ENCODE measurements at regions of chr10 and their contacts with region 1.

Region 1: DNA sequence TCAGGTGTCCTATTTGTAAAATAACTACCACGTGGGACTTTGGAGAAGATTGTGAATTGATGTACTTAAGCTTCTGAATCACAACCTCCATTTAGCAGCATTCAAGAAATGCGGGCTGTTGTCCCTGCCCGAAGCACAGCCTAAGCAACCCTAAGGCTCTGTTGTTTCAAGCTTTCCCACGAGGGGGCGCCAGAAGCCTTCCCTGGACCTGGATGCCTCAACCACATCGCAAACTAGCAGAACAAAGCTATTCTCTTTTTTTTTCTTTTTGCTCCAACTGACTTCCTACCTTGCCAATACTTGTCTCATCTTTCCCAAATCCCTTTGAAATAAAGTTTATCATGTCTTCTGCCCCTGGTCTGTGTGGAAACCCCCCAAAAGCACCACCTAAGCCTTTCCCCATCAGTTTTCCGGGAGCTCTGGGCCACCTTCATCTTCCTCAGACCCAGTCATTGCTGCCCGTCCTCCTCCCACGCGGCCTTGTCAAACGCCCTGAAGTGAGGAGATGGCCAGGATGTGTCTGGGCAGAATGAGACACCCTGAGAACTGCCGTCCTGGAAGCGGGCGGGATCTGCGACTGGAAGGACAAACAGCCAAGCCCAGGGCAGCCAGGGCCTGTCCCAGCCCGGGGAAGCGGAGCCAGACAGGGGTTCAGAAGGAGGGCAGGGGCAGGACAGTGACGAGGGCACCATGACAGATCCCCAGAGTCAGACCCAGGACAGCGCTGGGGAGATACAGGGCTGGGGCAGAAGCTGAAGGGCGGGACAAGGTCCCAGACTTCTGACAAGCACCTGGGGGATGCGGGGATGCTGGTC is 112.7 kb downstream of the SLIT1 start:
- DNase-seq: peak; percentile 46
- H3K4me3 ChIP-seq: no peak overlapping the region
- H3K27ac ChIP-seq: no peak overlapping the region
- H3K27me3 ChIP-seq: peaks cover 36% of the 10 kb centered on the region
- CTCF ChIP-seq: peak; percentile 94

Region 2: GRCh38 chr10:96949039-96949683 is 123.9 kb before region 1 on chr10:
- CTCF ChIA-PET with region 1: no interaction called
- POLR2A ChIA-PET with region 1: no interaction called
- DNase-seq: no peak
- H3K4me3 ChIP-seq: no peak overlapping the region
- H3K27ac ChIP-seq: no peak overlapping the region
- H3K27me3 ChIP-seq: no peaks in the 10 kb centered on the region
- CTCF ChIP-seq: no peak

Region 3: GRCh38 chr10:97016728-97017473 is 56.2 kb before region 1 on chr10:
- CTCF ChIA-PET with region 1: no interaction called
- POLR2A ChIA-PET with region 1: no interaction called
- DNase-seq: no peak
- H3K4me3 ChIP-seq: no peak overlapping the region
- H3K27ac ChIP-seq: no peak overlapping the region
- H3K27me3 ChIP-seq: peaks cover 13% of the 10 kb centered on the region
- CTCF ChIP-seq: no peak

Region 4: GRCh38 chr10:97059006-97059871 is 13.8 kb before region 1 on chr10:
- CTCF ChIA-PET with region 1: interaction called, 24 read pairs
- POLR2A ChIA-PET with region 1: no interaction called
- DNase-seq: no peak
- H3K4me3 ChIP-seq: no peak overlapping the region
- H3K27ac ChIP-seq: no peak overlapping the region
- H3K27me3 ChIP-seq: peaks cover 24% of the 10 kb centered on the region
- CTCF ChIP-seq: no peak

Region 5: DNA sequence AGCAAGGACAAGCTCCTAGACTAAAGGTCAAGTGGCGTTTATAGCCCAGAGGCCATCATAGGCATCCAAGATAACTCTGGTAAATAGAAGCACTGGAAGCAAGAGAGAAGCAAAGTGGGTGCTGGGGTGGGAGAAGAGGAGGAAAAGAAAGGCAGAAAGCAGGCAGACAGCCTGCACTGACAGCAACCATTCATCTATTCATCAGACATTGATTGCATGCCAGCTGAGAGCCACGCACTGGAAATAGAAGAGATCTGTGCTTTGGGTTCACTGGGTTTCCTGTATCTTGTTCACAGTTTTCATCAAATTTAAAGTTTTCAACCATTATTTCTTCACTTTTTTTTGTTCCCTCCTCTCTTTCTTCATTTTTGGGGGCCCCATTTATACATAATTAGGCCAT is 117.4 kb after region 1 on chr10:
- CTCF ChIA-PET with region 1: interaction called, 26 read pairs
- POLR2A ChIA-PET with region 1: no interaction called
- DNase-seq: no peak
- H3K4me3 ChIP-seq: no peak overlapping the region
- H3K27ac ChIP-seq: no peak overlapping the region
- H3K27me3 ChIP-seq: peaks cover 41% of the 10 kb centered on the region
- CTCF ChIP-seq: no peak

Region 6: DNA sequence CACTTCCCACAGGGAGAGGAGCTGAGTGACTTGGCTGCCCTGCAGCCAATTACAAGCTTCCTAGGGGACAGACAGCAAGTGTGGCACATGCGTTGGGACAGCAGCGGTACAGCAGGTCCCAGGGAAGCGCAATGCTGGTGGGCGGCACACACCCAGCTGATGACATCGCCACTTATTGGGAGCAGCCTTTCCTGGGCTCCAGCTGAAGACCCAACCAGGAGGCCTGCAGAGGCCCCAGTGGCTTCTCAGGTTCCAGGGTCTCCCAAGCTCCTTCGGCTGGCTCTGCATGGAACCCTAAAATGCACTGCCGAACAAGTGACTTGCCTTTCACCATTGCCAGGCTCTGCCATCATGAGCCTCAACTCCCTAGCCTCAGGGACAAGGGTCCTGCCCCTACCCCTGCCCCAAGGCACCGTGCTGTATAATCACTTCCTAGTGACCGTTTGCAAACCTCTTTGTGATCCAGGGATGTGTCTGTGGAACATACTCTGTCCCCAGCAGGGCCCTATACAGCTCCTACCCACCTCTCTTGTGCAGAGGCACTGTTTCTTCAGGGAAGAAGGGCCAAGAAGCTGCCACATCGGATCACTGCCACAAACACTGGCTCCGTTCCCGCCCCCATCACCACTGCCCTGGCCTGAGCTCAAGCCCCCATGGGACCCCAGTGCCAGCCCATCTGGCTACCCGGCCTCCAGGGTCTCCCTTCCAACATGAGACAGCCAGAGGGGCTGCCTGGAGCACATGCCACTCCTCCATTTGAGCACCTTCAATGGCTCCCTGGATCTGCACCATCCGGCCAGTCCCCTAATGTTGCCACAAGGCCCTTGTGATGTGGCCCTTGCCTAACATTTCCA is 132.0 kb after region 1 on chr10:
- CTCF ChIA-PET with region 1: interaction called, 327 read pairs
- POLR2A ChIA-PET with region 1: interaction called, 3 read pairs
- DNase-seq: no peak
- H3K4me3 ChIP-seq: no peak overlapping the region
- H3K27ac ChIP-seq: no peak overlapping the region
- H3K27me3 ChIP-seq: peaks cover 20% of the 10 kb centered on the region
- CTCF ChIP-seq: no peak

Region 7: DNA sequence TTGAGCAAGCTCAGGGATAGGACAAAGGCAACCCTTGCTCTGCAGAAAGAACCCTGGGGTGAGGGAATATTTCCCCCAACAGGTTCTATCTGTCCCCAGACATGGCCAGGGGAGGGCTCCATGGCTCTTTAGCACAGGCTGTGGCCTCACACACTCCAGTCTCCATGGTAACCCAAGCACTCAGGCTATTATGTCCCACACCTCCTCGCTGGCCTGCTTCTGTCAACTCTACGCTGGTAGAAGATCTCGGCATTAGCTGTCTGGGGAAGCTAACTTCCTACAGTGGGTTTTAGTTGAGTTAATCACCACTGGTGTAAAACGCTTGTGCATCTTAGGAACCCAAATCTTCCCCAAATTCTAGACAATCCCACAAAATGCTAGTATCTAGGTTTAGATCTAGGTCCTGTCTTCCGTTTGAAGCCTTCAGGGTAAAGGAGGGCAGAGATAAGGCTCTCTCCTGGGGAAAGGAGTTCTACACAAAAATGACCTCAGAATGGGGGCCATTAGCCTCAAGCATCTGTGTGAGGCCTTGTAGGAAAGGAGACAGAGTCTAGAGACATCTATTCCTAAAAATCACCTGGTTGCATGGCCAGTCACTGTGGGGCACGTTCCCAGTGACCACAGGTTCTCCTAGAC is 149.4 kb after region 1 on chr10:
- CTCF ChIA-PET with region 1: interaction called, 30 read pairs
- POLR2A ChIA-PET with region 1: no interaction called
- DNase-seq: no peak
- H3K4me3 ChIP-seq: no peak overlapping the region
- H3K27ac ChIP-seq: no peak overlapping the region
- H3K27me3 ChIP-seq: no peaks in the 10 kb centered on the region
- CTCF ChIP-seq: no peak

Region 8: DNA sequence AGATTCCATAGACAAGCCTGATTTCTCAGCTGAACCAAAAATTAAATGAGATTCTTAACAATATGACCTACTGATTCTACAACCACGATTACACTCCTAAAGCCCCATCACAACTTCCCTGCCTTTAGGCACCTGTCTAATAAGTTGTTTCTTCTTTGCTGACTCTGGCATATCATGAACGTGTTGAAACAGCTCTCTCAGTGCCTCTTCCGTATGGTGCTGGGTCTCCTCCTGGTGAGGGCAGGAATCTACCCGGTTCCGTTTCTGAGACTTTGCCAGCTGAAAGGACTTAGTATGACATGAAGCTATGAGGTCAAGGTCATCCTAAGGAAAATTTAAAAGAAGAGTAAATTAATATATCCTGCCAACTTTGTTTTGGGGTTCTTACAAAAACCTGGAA is 170.8 kb after region 1 on chr10:
- CTCF ChIA-PET with region 1: interaction called, 116 read pairs
- POLR2A ChIA-PET with region 1: no interaction called
- DNase-seq: no peak
- H3K4me3 ChIP-seq: no peak overlapping the region
- H3K27ac ChIP-seq: no peak overlapping the region
- H3K27me3 ChIP-seq: no peaks in the 10 kb centered on the region
- CTCF ChIP-seq: no peak

Region 9: GRCh38 chr10:97318772-97319651 is 246.0 kb after region 1 on chr10 and contains the start of gene FRAT1:
- CTCF ChIA-PET with region 1: interaction called, 10 read pairs
- POLR2A ChIA-PET with region 1: no interaction called
- DNase-seq: peak; percentile 88
- H3K4me3 ChIP-seq: peak within 1 kb of the TSS; percentile 79
- H3K27ac ChIP-seq: peak within 1 kb of the TSS; percentile 98
- H3K27me3 ChIP-seq: peaks cover 6% of the 10 kb centered on the region
- CTCF ChIP-seq: no peak
- polyA plus RNA-seq, gene FRAT1: 1.1 and 1.2 TPM in 2 replicates

Measured in AG04450 (cell line).